Thyroid gland (tissue), 4 donors: ENCODE measurements at regions of chr15 and their contacts with region 1.

Region 1: DNA sequence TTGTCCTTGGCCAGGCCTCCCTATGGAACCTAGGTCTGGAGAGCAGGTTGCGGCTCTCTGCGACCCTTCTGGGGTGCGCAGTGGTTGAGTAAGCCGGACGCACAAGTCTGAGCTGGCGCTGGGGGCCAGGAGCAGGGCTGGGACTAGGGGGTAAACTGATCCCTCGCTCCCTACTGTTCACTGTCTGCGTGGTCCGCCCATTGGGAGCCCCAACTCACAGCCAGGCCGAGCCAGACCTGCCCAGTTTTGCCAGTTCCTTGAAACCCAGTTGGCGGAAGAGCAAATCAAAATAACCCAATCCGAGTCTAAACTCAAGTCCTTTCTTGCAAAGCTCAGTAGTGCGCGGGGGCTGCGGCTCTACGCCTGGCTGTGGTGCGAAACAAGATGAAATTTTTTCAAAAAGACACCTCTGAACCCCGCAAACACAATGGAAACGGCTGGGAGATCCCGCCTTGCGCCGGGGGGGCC is 17.5 kb downstream of the RGMA start:
- DNase-seq: peak; percentile 17 to 35
- H3K4me3 ChIP-seq: peak overlapping the region in 2 of 3 donors; percentile 28 to 52
- H3K27ac ChIP-seq: peak overlapping the region in 2 of 3 donors; percentile 67 to 69
- H3K4me1 ChIP-seq: peaks cover 9 to 17% of the 10 kb centered on the region in 2 donors
- H3K27me3 ChIP-seq: no peaks in the 10 kb centered on the region
- CTCF ChIP-seq: no peak
- POLR2A ChIP-seq: no peak

Region 2: GRCh38 chr15:92903941-92904831 is 167.3 kb before region 1 on chr15:
- intact Hi-C with region 1: no loop called
- DNase-seq: peak; percentile 99
- H3K4me3 ChIP-seq: peak overlapping the region; percentile 15 to 43 (median 24)
- H3K27ac ChIP-seq: peak overlapping the region; percentile 98 to 100 (median 98)
- H3K4me1 ChIP-seq: peaks cover 42 to 44% of the 10 kb centered on the region in 2 donors
- H3K27me3 ChIP-seq: no peaks in the 10 kb centered on the region
- CTCF ChIP-seq: no peak
- POLR2A ChIP-seq: peak; percentile 78 to 99

Region 3: GRCh38 chr15:93037820-93038705 is 33.4 kb before region 1 on chr15:
- intact Hi-C with region 1: loop called (anchors 2 kb)
- DNase-seq: peak in 1 of 2 donors; percentile 2
- H3K4me3 ChIP-seq: no peak overlapping the region
- H3K27ac ChIP-seq: no peak overlapping the region
- H3K4me1 ChIP-seq: peaks cover 0 to 3% of the 10 kb centered on the region in 2 donors
- H3K27me3 ChIP-seq: no peaks in the 10 kb centered on the region
- CTCF ChIP-seq: no peak
- POLR2A ChIP-seq: no peak

Region 4: DNA sequence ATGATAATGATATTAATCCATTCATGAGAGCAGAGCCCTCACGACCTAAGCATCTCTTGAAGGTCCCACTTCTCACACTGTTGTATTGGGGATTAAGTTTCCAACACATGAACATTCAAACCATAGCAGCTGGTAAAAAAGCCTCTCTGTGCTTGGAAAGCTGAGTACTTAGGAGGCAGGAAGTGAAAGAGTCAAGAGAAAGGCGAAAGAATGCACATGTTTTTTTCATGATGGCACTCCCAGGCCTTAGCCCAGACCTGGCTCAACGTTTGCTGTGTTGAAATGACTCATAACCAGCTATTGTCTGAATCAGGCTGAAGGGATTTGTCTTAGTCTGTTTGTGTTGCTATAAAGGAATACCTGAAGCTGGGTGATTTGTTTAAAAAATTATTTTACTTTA is 101.9 kb after region 1 on chr15:
- intact Hi-C with region 1: no loop called
- DNase-seq: no peak
- H3K4me3 ChIP-seq: no peak overlapping the region
- H3K27ac ChIP-seq: no peak overlapping the region
- H3K4me1 ChIP-seq: no peaks in the 10 kb centered on the region
- H3K27me3 ChIP-seq: no peaks in the 10 kb centered on the region
- CTCF ChIP-seq: no peak
- POLR2A ChIP-seq: no peak